ENCODE measurements at regions of chr7 and their contacts with region 1.

Region 1: DNA sequence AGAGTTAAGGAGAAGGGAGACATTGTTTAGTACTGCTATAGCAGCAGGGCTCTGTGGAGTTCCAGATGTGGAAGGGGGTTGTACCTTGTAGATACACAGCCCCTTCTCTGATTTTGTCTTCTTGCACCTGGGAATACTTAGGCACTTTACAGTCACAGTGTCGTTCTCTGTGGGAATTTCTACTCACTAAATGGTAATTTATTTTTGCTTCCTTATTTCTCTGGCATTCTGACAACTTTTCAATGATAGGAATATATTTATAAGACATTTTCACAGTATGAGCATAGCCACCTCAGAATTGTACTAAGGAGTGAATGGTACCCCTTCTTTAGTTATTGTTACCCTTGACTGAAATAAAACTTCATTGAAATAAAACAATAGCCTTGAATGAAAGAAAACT is 132.8 kb downstream of the SUGCT start:
- DNase-seq: no peak
- ATAC-seq: no peak
- H3K4me3 ChIP-seq: no peak overlapping the region
- H3K27ac ChIP-seq: no peak overlapping the region
- H3K4me1 ChIP-seq: no peaks in the 10 kb centered on the region
- H3K27me3 ChIP-seq: no peaks in the 10 kb centered on the region
- CTCF ChIP-seq: no peak

Region 2: GRCh38 chr7:40093631-40094350 is 173.8 kb before region 1 on chr7:
- CTCF ChIA-PET with region 1: no interaction called
- POLR2A ChIA-PET with region 1: no interaction called
- intact Hi-C with region 1: no loop called
- DNase-seq: no peak
- ATAC-seq: no peak
- H3K4me3 ChIP-seq: no peak overlapping the region
- H3K27ac ChIP-seq: no peak overlapping the region
- H3K4me1 ChIP-seq: no peaks in the 10 kb centered on the region
- H3K27me3 ChIP-seq: no peaks in the 10 kb centered on the region
- CTCF ChIP-seq: no peak

Region 3: GRCh38 chr7:40299097-40299496 is 31.5 kb after region 1 on chr7:
- CTCF ChIA-PET with region 1: no interaction called
- POLR2A ChIA-PET with region 1: no interaction called
- intact Hi-C with region 1: no loop called
- DNase-seq: peak; percentile 56
- ATAC-seq: peak; percentile 80
- H3K4me3 ChIP-seq: no peak overlapping the region
- H3K27ac ChIP-seq: no peak overlapping the region
- H3K4me1 ChIP-seq: peaks cover 18% of the 10 kb centered on the region; the same call in 1 of the 2 replicates
- H3K27me3 ChIP-seq: no peaks in the 10 kb centered on the region
- CTCF ChIP-seq: no peak

Region 4: GRCh38 chr7:41599760-41600159 is 1332.2 kb after region 1 on chr7:
- CTCF ChIA-PET with region 1: no interaction called
- POLR2A ChIA-PET with region 1: interaction called, 10 read pairs
- intact Hi-C with region 1: no loop called
- DNase-seq: no peak
- ATAC-seq: no peak
- H3K4me3 ChIP-seq: no peak overlapping the region
- H3K27ac ChIP-seq: no peak overlapping the region
- H3K4me1 ChIP-seq: no peaks in the 10 kb centered on the region
- H3K27me3 ChIP-seq: no peaks in the 10 kb centered on the region
- CTCF ChIP-seq: peak; percentile 46